HEK293 (cell line): ENCODE measurements at regions of chrX and their contacts with region 1.

Region 1: GRCh38 chrX:124098089-124098488 is 136.6 kb downstream of the STAG2 start:
- H3K4me3 ChIP-seq: no peak overlapping the region
- H3K27ac ChIP-seq: no peak overlapping the region
- H3K4me1 ChIP-seq: no peaks in the 10 kb centered on the region
- CTCF ChIP-seq: no peak; the same call in 1 of the 2 replicates

Region 2: GRCh38 chrX:123927845-123928244 is 170.2 kb before region 1 on chrX:
- CTCF ChIA-PET with region 1: no interaction called
- POLR2A ChIA-PET with region 1: no interaction called
- H3K4me3 ChIP-seq: no peak overlapping the region
- H3K27ac ChIP-seq: no peak overlapping the region
- H3K4me1 ChIP-seq: no peaks in the 10 kb centered on the region
- CTCF ChIP-seq: no peak

Region 3: GRCh38 chrX:123976706-123977316 is 121.3 kb before region 1 on chrX:
- CTCF ChIA-PET with region 1: no interaction called
- POLR2A ChIA-PET with region 1: no interaction called
- H3K4me3 ChIP-seq: no peak overlapping the region
- H3K27ac ChIP-seq: no peak overlapping the region
- H3K4me1 ChIP-seq: peaks cover 16% of the 10 kb centered on the region
- CTCF ChIP-seq: peak; percentile 51

Region 4: GRCh38 chrX:124086411-124086810 is 11.7 kb before region 1 on chrX:
- CTCF ChIA-PET with region 1: interaction called, 10 read pairs
- POLR2A ChIA-PET with region 1: no interaction called
- H3K4me3 ChIP-seq: no peak overlapping the region
- H3K27ac ChIP-seq: no peak overlapping the region
- H3K4me1 ChIP-seq: no peaks in the 10 kb centered on the region
- CTCF ChIP-seq: no peak

Region 5: DNA sequence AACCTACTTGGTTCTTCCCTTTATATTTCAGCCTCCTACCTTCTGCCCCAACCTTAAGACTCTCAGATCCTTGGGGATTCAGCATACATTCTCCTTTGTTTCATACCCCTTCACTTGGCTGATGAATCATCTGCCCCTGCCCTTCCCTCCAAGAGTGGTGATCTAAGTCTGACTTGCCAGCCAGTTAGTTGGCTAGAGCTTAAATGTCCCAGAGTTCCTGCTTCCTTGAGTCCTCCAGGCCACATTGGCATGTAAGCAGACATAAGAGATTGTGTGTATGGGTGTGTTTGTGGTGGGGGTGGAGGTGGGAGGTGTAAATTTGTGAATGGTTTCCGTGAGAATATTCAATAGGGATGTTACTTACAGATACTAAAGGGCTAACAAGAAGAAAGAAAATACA is 230.7 kb after region 1 on chrX:
- CTCF ChIA-PET with region 1: no interaction called
- POLR2A ChIA-PET with region 1: no interaction called
- H3K4me3 ChIP-seq: no peak overlapping the region
- H3K27ac ChIP-seq: no peak overlapping the region
- H3K4me1 ChIP-seq: no peaks in the 10 kb centered on the region
- CTCF ChIP-seq: no peak

Region 6: DNA sequence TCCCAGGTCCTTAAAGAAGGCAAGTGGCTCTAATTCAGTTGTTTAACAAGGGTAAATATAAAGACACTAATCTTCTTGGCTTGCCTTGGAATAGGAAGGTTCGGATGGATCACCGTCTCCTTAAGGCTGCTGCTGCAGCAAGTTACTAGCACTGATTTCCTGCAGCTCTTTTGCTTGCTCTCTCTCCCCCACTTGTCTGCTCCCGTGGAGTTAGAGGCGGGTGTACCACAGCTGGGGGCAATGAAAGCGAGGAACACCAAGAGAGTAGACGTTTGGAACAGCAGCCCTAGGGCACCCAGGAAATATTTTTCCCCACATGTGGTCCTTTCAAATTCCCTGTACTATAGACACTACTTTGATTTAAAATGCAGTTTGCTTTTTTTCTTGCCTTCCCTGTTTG is 450.5 kb after region 1 on chrX:
- CTCF ChIA-PET with region 1: no interaction called
- POLR2A ChIA-PET with region 1: no interaction called
- H3K4me3 ChIP-seq: no peak overlapping the region
- H3K27ac ChIP-seq: no peak overlapping the region
- H3K4me1 ChIP-seq: no peaks in the 10 kb centered on the region
- CTCF ChIP-seq: no peak